ENCODE measurements at regions of chr20 and their contacts with region 1.

Region 1: GRCh38 chr20:20860078-20860806 is 147.8 kb upstream of the RALGAPA2 start:
- DNase-seq: peak; percentile 91
- H3K4me3 Mint-ChIP-seq: no peak overlapping the region
- H3K27ac Mint-ChIP-seq: no peak overlapping the region
- H3K4me1 Mint-ChIP-seq: no peaks in the 10 kb centered on the region
- H3K27me3 Mint-ChIP-seq: peaks cover 23% of the 10 kb centered on the region

Region 2: GRCh38 chr20:20837574-20838021 is 22.6 kb before region 1 on chr20:
- CTCF ChIA-PET with region 1: interaction called, 16 read pairs
- DNase-seq: peak; percentile 57
- H3K4me3 Mint-ChIP-seq: no peak overlapping the region
- H3K27ac Mint-ChIP-seq: no peak overlapping the region
- H3K4me1 Mint-ChIP-seq: peaks cover 3% of the 10 kb centered on the region
- H3K27me3 Mint-ChIP-seq: peaks cover 15% of the 10 kb centered on the region

Region 3: DNA sequence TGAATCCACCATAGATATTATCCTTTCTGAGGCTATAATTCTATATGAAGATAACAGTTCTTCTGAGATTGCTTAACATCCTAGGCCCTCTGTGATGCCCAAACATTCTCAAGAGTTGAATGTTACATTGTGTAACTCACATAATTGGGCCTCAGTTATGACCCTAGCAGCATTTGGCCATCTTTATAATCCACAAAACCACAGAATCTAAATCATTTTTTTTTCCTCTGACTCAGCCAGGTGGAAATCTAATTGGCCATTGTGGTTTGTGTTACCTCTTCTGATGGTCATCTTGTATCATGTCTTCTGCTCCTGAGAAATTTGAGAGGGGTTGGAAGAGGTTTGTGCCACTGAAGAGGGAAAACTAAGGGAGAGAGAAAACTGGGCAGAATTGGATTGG is 146.4 kb after region 1 on chr20:
- CTCF ChIA-PET with region 1: no interaction called
- DNase-seq: no peak
- H3K4me3 Mint-ChIP-seq: no peak overlapping the region
- H3K27ac Mint-ChIP-seq: no peak overlapping the region
- H3K4me1 Mint-ChIP-seq: no peaks in the 10 kb centered on the region
- H3K27me3 Mint-ChIP-seq: no peaks in the 10 kb centered on the region

Region 4: GRCh38 chr20:21505161-21505809 is 645.0 kb after region 1 on chr20:
- CTCF ChIA-PET with region 1: interaction called, 27 read pairs
- DNase-seq: peak; percentile 80
- H3K4me3 Mint-ChIP-seq: peak overlapping the region; percentile 47
- H3K27ac Mint-ChIP-seq: peak overlapping the region; percentile 49
- H3K4me1 Mint-ChIP-seq: peaks cover 29% of the 10 kb centered on the region
- H3K27me3 Mint-ChIP-seq: peaks cover 82% of the 10 kb centered on the region